AG04449 (cell line): ENCODE measurements at regions of chr3 and their contacts with region 1.

Region 1: GRCh38 chr3:60948484-60948883 is 302.8 kb downstream of the FHIT start:
- DNase-seq: no peak
- H3K4me3 ChIP-seq: no peak overlapping the region
- CTCF ChIP-seq: peak; percentile 28

Region 2: GRCh38 chr3:60582288-60582687 is 366.2 kb before region 1 on chr3:
- CTCF ChIA-PET with region 1: interaction called, 20 read pairs
- POLR2A ChIA-PET with region 1: interaction called, 3 read pairs
- DNase-seq: no peak
- H3K4me3 ChIP-seq: no peak overlapping the region
- CTCF ChIP-seq: no peak

Region 3: GRCh38 chr3:60935709-60936108 is 12.8 kb before region 1 on chr3:
- CTCF ChIA-PET with region 1: interaction called, 10 read pairs
- POLR2A ChIA-PET with region 1: no interaction called
- DNase-seq: peak; percentile 55
- H3K4me3 ChIP-seq: no peak overlapping the region
- CTCF ChIP-seq: no peak